ENCODE measurements at regions of chr2 and their contacts with region 1.

Region 1: GRCh38 chr2:145273840-145274239 is 753.9 kb upstream of the ZEB2 start:
- DNase-seq: no peak
- H3K4me3 ChIP-seq: no peak overlapping the region
- H3K27ac ChIP-seq: no peak overlapping the region
- H3K4me1 ChIP-seq: no peaks in the 10 kb centered on the region
- H3K27me3 ChIP-seq: no peaks in the 10 kb centered on the region
- CTCF ChIP-seq: no peak

Region 2: GRCh38 chr2:144152817-144153271 is 1121.0 kb before region 1 on chr2:
- intact Hi-C with region 1: loop called (anchors 5 kb)
- DNase-seq: no peak
- H3K4me3 ChIP-seq: no peak overlapping the region
- H3K27ac ChIP-seq: no peak overlapping the region
- H3K4me1 ChIP-seq: peaks cover 0 to 16% (median 0%) of the 10 kb centered on the region in 4 donors
- H3K27me3 ChIP-seq: no peaks in the 10 kb centered on the region
- CTCF ChIP-seq: no peak

Region 3: GRCh38 chr2:145503511-145503910 is 229.7 kb after region 1 on chr2:
- intact Hi-C with region 1: no loop called
- DNase-seq: no peak
- H3K4me3 ChIP-seq: no peak overlapping the region
- H3K27ac ChIP-seq: no peak overlapping the region
- H3K4me1 ChIP-seq: no peaks in the 10 kb centered on the region
- H3K27me3 ChIP-seq: no peaks in the 10 kb centered on the region
- CTCF ChIP-seq: no peak

Measured in tibial artery (tissue), 4 donors.